ENCODE measurements at regions of chr11 and their contacts with region 1.

Region 1: DNA sequence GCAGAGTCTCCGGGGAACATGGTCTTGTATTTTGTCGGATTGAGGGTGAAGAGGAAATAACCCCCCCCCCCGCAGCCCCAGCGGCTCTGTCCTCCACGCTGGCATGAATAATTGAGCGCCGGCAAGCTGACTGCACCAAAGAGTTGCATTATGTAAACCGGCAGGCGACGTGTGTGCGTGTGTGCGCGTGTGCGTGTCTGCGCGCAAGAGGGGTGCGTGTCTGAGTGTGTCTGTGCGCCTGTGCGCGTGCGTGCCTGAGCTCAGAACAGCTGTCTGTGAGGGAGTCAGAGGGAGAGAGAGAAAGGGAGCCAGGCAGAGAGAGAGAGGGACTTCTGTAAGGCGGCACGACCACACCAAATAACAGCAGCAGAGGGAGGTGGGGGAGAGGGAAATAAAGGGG is 94.4 kb downstream of the SCN3B start:
- DNase-seq: no peak
- H3K4me3 ChIP-seq: peak overlapping the region in 2 of 4 experiments; percentile 9 to 34; a peak in 2 of 8 replicates
- H3K27ac ChIP-seq: no peak overlapping the region
- H3K4me1 ChIP-seq: peaks cover 8 to 22% (median 16%) of the 10 kb centered on the region in 4 experiments
- H3K27me3 ChIP-seq: no peaks in the 10 kb centered on the region
- CTCF ChIP-seq: no peak
- EP300 ChIP-seq: no peak
- POLR2A ChIP-seq: no peak
- RAD21 ChIP-seq: no peak

Region 2: DNA sequence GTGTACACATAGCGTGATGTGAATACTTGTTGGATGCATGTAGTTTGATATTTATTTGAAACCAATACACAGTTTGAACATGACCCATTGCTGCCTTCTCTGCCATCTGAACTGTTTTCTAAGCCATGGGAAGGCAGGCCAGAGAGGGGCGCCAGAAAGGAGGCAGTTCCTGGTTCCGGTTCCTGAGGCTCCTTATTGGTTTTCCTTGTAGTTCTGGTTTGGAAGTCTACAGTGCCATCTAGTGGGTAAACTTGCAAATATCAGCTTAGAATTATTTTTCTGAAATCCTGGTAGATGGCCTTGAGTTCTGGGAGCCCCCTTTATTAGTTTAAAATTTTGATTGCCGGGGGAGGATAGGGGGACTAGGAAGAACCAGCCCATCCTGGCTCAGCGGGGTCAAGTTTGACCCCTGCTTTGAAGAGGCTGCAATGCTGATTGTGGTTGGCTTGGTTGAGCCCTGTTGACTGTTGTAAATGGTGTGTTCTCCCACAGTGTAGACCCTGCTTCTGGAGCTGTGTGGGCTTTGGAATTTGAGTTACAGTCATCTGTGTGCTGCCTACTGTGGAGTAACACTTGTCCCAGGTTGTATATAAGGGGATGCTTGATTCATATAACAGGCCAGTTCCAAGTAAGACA is 81.5 kb before region 1 on chr11:
- CTCF ChIA-PET with region 1: interaction called, 12 read pairs
- POLR2A ChIA-PET with region 1: no interaction called
- DNase-seq: peak in 1 of 2 experiments; percentile 62
- H3K4me3 ChIP-seq: no peak overlapping the region
- H3K27ac ChIP-seq: no peak overlapping the region
- H3K4me1 ChIP-seq: peaks cover 2 to 15% (median 8%) of the 10 kb centered on the region in 4 experiments; a peak in 6 of 7 replicates
- H3K27me3 ChIP-seq: no peaks in the 10 kb centered on the region; a peak in 1 of 7 replicates
- CTCF ChIP-seq: peak; percentile 48 to 97 (median 76)
- EP300 ChIP-seq: no peak
- POLR2A ChIP-seq: no peak
- RAD21 ChIP-seq: peak; percentile 89 to 96

Region 3: GRCh38 chr11:123505546-123506299 is 54.3 kb before region 1 on chr11:
- CTCF ChIA-PET with region 1: interaction called, 115 read pairs
- POLR2A ChIA-PET with region 1: no interaction called
- DNase-seq: peak; percentile 25 to 64
- H3K4me3 ChIP-seq: no peak overlapping the region
- H3K27ac ChIP-seq: no peak overlapping the region
- H3K4me1 ChIP-seq: peaks cover 3 to 20% (median 16%) of the 10 kb centered on the region in 4 experiments
- H3K27me3 ChIP-seq: no peaks in the 10 kb centered on the region
- CTCF ChIP-seq: no peak
- EP300 ChIP-seq: no peak
- POLR2A ChIP-seq: no peak
- RAD21 ChIP-seq: no peak

Region 4: GRCh38 chr11:123519055-123519796 is 40.8 kb before region 1 on chr11:
- CTCF ChIA-PET with region 1: interaction called, 62 read pairs
- POLR2A ChIA-PET with region 1: interaction called, 4 read pairs
- DNase-seq: peak in 1 of 2 experiments; percentile 52
- H3K4me3 ChIP-seq: no peak overlapping the region
- H3K27ac ChIP-seq: no peak overlapping the region
- H3K4me1 ChIP-seq: peaks cover 12 to 22% (median 16%) of the 10 kb centered on the region in 4 experiments
- H3K27me3 ChIP-seq: no peaks in the 10 kb centered on the region
- CTCF ChIP-seq: no peak
- EP300 ChIP-seq: no peak
- POLR2A ChIP-seq: no peak
- RAD21 ChIP-seq: no peak

Region 5: DNA sequence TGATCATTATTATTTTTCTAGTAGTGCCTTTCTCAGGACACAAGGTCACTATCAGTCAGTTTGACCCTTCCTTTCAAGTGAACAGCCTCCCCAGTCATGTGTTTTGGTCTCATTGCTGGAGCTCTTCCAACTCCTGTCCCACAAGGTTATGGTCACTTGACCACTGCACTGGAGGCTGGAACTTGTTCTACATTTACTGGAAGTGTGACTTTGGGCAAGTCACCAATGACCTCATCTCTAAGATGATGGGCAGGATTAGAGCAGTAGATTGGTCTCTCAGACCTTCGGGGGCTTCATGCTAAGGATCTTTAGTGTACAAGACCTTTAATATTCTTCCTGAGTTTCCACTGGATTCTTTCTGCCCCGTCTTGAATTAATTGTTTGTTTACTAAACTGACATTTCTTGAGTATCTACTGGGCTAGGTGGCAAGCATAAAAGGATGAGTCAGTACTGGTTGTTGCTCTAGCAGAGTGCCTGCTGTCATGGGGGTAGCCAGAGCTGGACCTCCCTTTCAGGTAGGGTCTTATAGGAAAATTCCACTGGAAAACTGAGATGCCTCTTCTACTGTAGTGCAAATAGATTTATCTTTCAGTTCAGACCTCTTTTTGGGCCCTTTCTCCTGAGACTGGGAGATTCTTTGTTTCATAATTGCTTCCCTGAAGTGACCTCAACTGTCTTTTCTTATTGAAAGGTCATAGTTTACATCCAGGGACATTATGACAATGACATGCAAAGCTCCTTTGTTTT is 23.1 kb before region 1 on chr11:
- CTCF ChIA-PET with region 1: interaction called, 68 read pairs
- POLR2A ChIA-PET with region 1: interaction called, 3 read pairs
- DNase-seq: peak in 1 of 2 experiments; percentile 47
- H3K4me3 ChIP-seq: peak overlapping the region in 1 of 4 experiments; percentile 26; a peak in 1 of 8 replicates
- H3K27ac ChIP-seq: peak overlapping the region; percentile 68; the same call in 1 of the 2 replicates
- H3K4me1 ChIP-seq: peaks cover 8 to 21% (median 16%) of the 10 kb centered on the region in 4 experiments; a peak in 5 of 7 replicates
- H3K27me3 ChIP-seq: no peaks in the 10 kb centered on the region
- CTCF ChIP-seq: no peak
- EP300 ChIP-seq: no peak
- POLR2A ChIP-seq: no peak
- RAD21 ChIP-seq: no peak

Region 6: DNA sequence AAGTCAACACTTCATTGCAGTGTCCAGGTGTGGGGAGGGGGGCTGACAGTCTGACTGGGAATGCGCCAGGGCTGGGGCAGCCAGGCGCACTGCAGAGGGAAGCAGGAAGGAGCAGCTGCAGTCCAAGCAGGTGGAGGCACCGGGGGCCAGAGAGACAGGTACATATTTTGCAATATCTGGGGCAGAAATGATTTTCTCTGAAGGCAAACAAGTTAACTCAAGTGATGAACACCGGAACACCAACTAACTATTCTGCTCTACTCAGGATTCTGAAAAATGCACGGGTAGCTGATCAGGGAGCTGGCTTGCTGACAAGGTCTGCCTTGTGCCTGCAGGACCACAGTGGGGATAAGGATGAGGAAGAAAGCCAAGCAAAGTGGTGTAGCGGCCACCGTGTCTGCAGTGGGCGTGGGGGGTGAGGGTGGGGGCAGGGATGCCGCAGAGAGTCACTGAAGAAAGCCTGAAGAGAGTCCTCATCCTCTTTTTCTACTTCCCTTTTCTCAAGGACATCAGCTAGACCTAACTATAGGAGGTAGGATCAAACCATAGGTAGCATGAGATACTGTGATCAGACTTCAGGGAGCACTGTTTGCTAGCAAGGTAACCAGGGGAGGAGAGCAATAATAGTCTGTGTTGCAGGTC is 11.1 kb after region 1 on chr11:
- CTCF ChIA-PET with region 1: interaction called, 114 read pairs
- POLR2A ChIA-PET with region 1: interaction called, 6 read pairs
- DNase-seq: no peak
- H3K4me3 ChIP-seq: no peak overlapping the region
- H3K27ac ChIP-seq: no peak overlapping the region
- H3K4me1 ChIP-seq: peaks cover 0 to 13% (median 6%) of the 10 kb centered on the region in 4 experiments; a peak in 6 of 7 replicates
- H3K27me3 ChIP-seq: no peaks in the 10 kb centered on the region
- CTCF ChIP-seq: no peak
- EP300 ChIP-seq: no peak
- POLR2A ChIP-seq: no peak
- RAD21 ChIP-seq: no peak

Region 7: DNA sequence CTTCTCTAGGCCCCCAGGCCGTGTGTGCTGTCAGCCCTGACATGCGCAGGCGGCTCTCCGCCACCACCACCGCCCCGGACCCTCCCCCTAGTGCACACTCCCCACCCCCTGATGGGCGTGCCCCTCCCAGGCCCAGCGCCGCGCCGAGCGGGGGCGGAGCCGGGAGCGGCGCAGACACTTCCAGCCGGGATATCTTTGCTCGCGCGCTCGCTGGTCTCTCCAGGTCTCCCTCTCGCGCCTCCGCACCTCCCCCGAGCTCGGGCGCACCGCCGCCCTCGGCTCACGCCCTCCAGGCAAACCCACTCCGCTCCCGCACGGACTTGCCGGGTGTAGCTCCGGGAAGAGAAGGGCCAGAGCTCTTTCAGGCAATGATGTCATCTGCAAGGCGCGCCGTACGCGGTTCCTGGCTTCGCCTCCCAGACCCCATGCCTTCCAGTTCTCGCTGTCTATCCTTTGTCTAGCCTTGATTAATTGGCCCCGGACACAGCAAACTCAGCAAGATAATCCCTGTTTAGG is 94.6 kb after region 1 on chr11 and contains the start of gene SCN3B:
- CTCF ChIA-PET with region 1: no interaction called
- POLR2A ChIA-PET with region 1: no interaction called
- DNase-seq: peak in 1 of 2 experiments; percentile 91
- H3K4me3 ChIP-seq: peak within 1 kb of the TSS; percentile 75 to 80 (median 78)
- H3K27ac ChIP-seq: no peak within 1 kb of the TSS
- H3K4me1 ChIP-seq: peaks cover 0 to 3% (median 1%) of the 10 kb centered on the region in 4 experiments; a peak in 3 of 7 replicates
- H3K27me3 ChIP-seq: peaks cover 8 to 32% (median 21%) of the 10 kb centered on the region in 4 experiments
- CTCF ChIP-seq: no peak
- EP300 ChIP-seq: no peak
- POLR2A ChIP-seq: no peak
- RAD21 ChIP-seq: no peak
- total RNA-seq, gene SCN3B: 0.82 and 1.1 TPM in 2 replicates